Ascending aorta (tissue), 2 donors: ENCODE measurements at regions of chr11 and their contacts with region 1.

Region 1: GRCh38 chr11:72222907-72223614 is 1.5 kb upstream of the INPPL1 start:
- DNase-seq: peak; percentile 80 to 97
- H3K4me3 ChIP-seq: peak overlapping the region; percentile 93 to 99
- H3K27ac ChIP-seq: peak overlapping the region; percentile 96 to 97
- H3K4me1 ChIP-seq: peaks cover 6 to 18% of the 10 kb centered on the region in 2 donors
- H3K27me3 ChIP-seq: no peaks in the 10 kb centered on the region
- CTCF ChIP-seq: peak; percentile 17 to 24 (median 18)

Region 2: DNA sequence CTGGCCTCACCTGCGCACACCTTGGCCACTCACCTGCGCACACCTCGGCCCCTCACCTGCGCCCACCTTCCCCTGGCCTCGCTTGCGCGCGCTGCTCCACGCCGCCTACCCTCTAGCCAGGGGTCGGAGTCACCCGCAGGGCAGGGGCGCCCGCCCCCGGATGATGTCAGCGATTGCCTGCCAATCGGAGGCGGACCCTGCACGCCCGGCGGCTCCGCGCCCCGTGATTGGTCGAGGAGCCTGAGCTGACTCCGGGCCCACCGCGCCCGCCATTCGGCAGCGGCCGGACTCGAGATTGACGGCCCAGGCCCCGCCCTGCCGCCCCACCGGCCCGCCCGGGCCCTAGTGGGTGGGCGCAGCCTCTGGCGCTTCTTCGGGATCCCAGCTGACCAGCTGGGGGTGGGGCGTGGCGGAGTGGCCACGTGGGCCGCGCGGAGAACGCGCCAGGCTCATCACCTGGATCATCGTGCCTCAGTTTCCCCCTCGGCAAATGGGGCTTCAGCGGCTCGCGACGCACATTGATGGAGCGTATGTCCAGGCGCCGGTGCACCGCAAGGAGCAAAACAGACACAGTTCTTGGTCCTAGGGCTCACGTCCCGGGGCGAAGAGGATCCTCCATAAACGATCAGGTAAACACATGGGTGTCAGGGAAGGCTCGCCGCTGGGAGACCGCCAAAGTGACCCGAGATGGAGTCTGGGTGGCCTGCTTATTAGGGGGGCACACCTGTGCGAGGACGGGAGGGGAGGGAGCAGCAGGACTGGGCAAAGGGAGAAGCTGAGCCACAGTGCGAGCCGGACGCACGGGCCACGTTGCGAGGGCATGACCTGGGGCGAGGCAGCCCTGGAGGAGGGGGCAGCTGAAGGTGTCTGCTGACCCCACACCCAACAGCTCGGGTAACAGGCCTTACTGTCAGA is 774.5 kb before region 1 on chr11 and contains the start of gene DHCR7:
- intact Hi-C with region 1: loop called (anchors 10 kb)
- DNase-seq: peak; percentile 82 to 98
- H3K4me3 ChIP-seq: peak within 1 kb of the TSS; percentile 79 to 95
- H3K27ac ChIP-seq: peak within 1 kb of the TSS; percentile 75 to 79
- H3K4me1 ChIP-seq: peaks cover 3 to 20% of the 10 kb centered on the region in 2 donors
- H3K27me3 ChIP-seq: no peaks in the 10 kb centered on the region
- CTCF ChIP-seq: peak in 1 of 3 experiments; percentile 11
- total RNA-seq, gene DHCR7: 66.2 TPM

Region 3: DNA sequence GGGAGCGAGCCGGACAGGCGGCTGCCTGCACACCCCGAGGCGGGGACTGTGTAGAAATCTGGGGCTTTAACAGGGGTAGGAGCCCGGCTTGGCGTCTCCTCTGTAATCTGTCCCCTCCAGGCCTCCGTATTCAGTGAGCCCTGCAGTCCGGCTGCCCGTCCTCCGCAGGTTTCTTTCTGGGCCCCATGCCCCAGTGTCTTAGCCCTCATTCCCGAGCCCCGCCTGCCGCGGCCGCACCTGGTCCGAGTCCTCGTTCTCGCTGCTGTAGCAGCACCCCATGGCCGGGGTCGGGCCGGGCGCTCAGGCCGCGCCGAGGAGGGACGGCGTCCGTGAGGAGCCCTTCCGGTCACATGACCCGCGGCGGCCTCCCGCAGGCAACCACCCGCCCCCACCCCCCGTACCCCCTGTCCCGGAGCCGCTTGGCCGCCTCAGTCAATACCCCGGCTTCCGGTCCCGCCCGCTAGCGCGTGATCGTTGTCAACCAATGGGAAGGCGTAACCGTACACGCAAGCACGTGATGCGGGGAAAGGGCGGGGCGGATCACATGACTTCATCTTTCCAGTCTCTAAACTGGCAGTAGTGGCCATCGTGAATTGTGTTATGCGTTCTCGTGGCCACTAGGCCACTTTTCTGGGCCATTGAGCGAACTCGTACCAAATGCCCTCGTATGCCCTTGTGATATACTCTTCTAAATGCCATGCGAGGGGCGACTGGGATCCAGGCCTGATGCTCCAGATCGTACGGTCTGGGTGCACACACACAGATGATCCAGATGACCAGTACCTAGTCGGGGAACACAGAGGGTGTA is 119.9 kb before region 1 on chr11 and contains the start of gene LAMTOR1:
- intact Hi-C with region 1: loop called (anchors 2 kb)
- DNase-seq: peak; percentile 97 to 100
- H3K4me3 ChIP-seq: peak within 1 kb of the TSS; percentile 78 to 80
- H3K27ac ChIP-seq: peak within 1 kb of the TSS; percentile 86 to 94
- H3K4me1 ChIP-seq: peaks cover 10 to 18% of the 10 kb centered on the region in 2 donors
- H3K27me3 ChIP-seq: no peaks in the 10 kb centered on the region
- CTCF ChIP-seq: peak; percentile 31 to 67 (median 58)
- total RNA-seq, gene LAMTOR1: 148 TPM

Region 4: DNA sequence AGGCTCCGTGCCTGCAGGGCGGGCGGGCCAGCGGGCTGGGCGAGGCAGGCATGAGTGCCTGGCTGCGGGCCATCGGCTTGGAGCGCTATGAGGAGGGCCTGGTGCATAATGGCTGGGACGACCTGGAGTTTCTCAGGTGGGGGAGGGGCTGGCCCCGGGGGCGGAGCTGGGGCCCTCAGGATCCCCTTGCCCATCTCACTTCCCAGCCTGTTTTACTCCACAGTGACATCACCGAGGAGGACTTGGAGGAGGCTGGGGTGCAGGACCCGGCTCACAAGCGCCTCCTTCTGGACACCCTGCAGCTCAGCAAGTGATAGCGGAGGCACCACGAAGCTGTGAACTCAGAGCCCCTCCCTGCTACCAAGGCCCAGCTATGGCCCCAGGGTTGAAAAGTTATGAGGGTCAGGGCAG is 15.0 kb after region 1 on chr11:
- intact Hi-C with region 1: loop called (anchors 1 kb)
- DNase-seq: no peak
- H3K4me3 ChIP-seq: no peak overlapping the region
- H3K27ac ChIP-seq: no peak overlapping the region
- H3K4me1 ChIP-seq: peaks cover 7 to 18% of the 10 kb centered on the region in 2 donors
- H3K27me3 ChIP-seq: peaks cover 6% of the 10 kb centered on the region
- CTCF ChIP-seq: peak; percentile 34 to 67 (median 59)

Region 5: GRCh38 chr11:73876424-73877300 is 1653.6 kb after region 1 on chr11 and contains the starts of genes COA4 and PAAF1:
- intact Hi-C with region 1: loop called (anchors 10 kb)
- DNase-seq: peak; percentile 79 to 96
- H3K4me3 ChIP-seq: peak within 1 kb of the TSS; percentile 73 to 86
- H3K27ac ChIP-seq: peak within 1 kb of the TSS; percentile 82 to 86
- H3K4me1 ChIP-seq: peaks cover 3 to 15% of the 10 kb centered on the region in 2 donors
- H3K27me3 ChIP-seq: no peaks in the 10 kb centered on the region
- CTCF ChIP-seq: no peak
- total RNA-seq, gene COA4: 92.7 TPM
- total RNA-seq, gene PAAF1: 36.3 TPM